Mammary epithelial cell (primary cell): ENCODE measurements at regions of chr17 and their contacts with region 1.

Region 1: GRCh38 chr17:52106638-52107261 is 51.8 kb downstream of the CA10 start:
- DNase-seq: peak; percentile 25
- H3K4me3 ChIP-seq: no peak overlapping the region
- H3K27ac ChIP-seq: no peak overlapping the region
- H3K4me1 ChIP-seq: peaks cover 9% of the 10 kb centered on the region
- H3K27me3 ChIP-seq: no peaks in the 10 kb centered on the region
- CTCF ChIP-seq: peak; percentile 78

Region 2: DNA sequence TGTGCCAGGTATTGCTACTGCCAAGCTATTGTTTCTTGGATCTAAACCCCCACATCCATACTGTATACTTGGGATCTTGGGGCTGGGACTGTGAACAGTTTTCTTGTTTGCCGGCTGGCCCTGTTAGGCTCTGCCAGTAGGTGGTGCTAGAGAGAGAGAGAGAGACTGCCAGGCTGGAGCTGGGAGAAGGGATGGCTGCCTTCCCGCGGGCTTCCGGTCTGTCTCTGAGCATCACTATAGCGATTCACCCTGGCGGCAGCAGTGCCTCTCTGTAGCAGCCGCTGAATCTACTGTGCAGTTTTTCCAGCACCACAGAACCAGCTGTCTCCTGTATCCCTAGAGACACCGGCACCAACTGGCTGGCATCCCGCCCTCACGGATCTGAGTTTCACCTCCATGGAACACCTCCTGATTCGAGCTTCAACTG is 645.2 kb before region 1 on chr17:
- CTCF ChIA-PET with region 1: no interaction called
- dilution Hi-C with region 1: no loop called
- in situ Hi-C with region 1: no loop called
- intact Hi-C with region 1: loop called (anchors 5 kb)
- DNase-seq: peak; percentile 24
- H3K4me3 ChIP-seq: no peak overlapping the region
- H3K27ac ChIP-seq: no peak overlapping the region
- H3K4me1 ChIP-seq: no peaks in the 10 kb centered on the region
- H3K27me3 ChIP-seq: no peaks in the 10 kb centered on the region
- CTCF ChIP-seq: peak; percentile 85 to 87

Region 3: DNA sequence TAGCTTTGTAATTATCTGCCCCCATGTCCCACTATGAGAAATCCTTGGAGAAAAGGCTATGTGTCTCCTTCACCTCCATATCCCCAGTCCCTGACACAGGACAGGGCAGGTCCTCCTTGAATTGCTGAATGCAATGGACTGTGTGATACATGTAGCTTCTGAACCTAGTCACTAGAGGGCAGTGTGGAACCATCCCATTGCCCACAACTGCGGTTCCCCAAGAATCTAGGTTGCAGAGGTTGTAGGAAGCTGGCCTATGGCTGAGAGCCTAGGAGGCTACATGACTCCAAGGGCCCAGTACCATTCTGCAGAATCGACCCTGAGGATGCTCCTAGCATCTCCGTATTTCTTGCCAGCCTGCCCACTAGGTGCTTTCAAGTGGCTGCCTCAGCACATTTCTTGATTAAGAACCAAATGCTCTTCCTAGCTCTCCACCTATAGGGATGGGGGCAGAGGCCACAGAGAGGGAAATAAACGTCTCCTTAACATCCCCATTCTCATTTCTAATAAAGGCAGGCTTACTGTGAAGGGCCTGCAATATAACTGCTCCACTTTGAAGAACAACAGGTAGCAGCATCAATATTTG is 342.3 kb before region 1 on chr17:
- CTCF ChIA-PET with region 1: interaction called, 4 read pairs
- dilution Hi-C with region 1: no loop called
- in situ Hi-C with region 1: loop called (anchors 10 kb)
- intact Hi-C with region 1: loop called (anchors 1 kb)
- DNase-seq: peak; percentile 58
- H3K4me3 ChIP-seq: no peak overlapping the region
- H3K27ac ChIP-seq: no peak overlapping the region
- H3K4me1 ChIP-seq: no peaks in the 10 kb centered on the region
- H3K27me3 ChIP-seq: no peaks in the 10 kb centered on the region
- CTCF ChIP-seq: peak; percentile 92 to 97

Region 4: GRCh38 chr17:51860954-51861561 is 245.7 kb before region 1 on chr17:
- CTCF ChIA-PET with region 1: interaction called, 4 read pairs
- dilution Hi-C with region 1: no loop called
- in situ Hi-C with region 1: loop called (anchors 10 kb)
- intact Hi-C with region 1: loop called (anchors 1 kb)
- DNase-seq: peak; percentile 35
- H3K4me3 ChIP-seq: no peak overlapping the region
- H3K27ac ChIP-seq: no peak overlapping the region
- H3K4me1 ChIP-seq: no peaks in the 10 kb centered on the region
- H3K27me3 ChIP-seq: peaks cover 3% of the 10 kb centered on the region
- CTCF ChIP-seq: peak; percentile 63 to 87

Region 5: DNA sequence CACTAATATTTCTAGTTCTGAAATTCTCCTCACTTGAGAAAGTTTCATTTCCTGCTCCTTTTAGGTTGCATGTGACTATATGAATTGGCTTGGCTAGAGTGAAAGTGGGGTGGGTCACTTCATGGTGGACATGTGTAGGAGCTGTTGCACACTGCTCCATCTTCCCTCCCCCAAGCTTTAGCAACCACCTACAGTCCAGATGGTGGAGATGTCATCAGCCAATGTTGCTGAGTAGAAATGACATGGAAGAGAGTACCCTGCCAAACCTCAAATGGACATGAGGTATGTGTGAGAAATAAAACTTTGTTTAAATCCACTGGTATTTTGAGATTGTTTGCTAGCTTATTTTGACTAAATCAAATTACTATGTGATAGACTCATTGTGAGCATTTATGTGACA is 229.8 kb before region 1 on chr17:
- CTCF ChIA-PET with region 1: no interaction called
- dilution Hi-C with region 1: no loop called
- in situ Hi-C with region 1: no loop called
- intact Hi-C with region 1: no loop called
- DNase-seq: no peak
- H3K4me3 ChIP-seq: no peak overlapping the region
- H3K27ac ChIP-seq: no peak overlapping the region
- H3K4me1 ChIP-seq: no peaks in the 10 kb centered on the region
- H3K27me3 ChIP-seq: peaks cover 2% of the 10 kb centered on the region
- CTCF ChIP-seq: no peak

Region 6: DNA sequence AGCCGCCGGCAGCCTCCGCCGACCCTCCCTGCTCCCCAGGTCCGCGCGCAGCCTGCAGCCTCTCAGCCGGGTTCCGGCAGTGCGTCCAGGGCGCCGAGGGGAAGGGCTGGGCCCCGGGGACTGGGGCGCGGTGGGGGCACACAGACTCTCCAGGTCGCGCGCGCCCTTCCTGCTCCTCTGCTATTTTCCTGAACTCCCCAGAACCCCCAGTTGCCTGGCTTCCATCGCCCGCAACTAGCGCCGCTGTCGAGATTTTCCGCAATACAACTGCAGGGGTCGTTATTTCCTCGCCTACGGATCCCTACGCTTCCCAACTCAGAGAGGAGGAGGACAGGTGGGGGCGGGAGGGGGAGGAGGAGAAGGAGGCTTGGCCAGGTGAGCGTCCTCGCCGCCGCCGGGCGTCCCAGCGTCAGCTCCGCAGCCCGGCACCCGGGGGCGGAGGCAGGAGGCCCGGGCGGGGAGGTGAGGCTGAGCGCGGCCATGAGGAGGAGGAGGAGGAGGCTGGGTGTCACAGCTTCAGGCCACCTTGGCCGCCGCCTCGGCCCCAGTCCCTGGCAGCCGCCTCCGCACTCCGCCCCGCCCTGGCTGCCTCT is 51.8 kb after region 1 on chr17 and contains the start of gene CA10:
- CTCF ChIA-PET with region 1: no interaction called
- dilution Hi-C with region 1: no loop called
- in situ Hi-C with region 1: no loop called
- intact Hi-C with region 1: loop called (anchors 1 kb)
- DNase-seq: no peak
- H3K4me3 ChIP-seq: peak within 1 kb of the TSS; percentile 41 to 60 (median 45)
- H3K27ac ChIP-seq: no peak within 1 kb of the TSS
- H3K4me1 ChIP-seq: peaks cover 25% of the 10 kb centered on the region
- H3K27me3 ChIP-seq: peaks cover 24% of the 10 kb centered on the region
- CTCF ChIP-seq: no peak
- total RNA-seq, gene CA10: 0.85 TPM in 1 of 2 donors, not detected in the other

Region 7: DNA sequence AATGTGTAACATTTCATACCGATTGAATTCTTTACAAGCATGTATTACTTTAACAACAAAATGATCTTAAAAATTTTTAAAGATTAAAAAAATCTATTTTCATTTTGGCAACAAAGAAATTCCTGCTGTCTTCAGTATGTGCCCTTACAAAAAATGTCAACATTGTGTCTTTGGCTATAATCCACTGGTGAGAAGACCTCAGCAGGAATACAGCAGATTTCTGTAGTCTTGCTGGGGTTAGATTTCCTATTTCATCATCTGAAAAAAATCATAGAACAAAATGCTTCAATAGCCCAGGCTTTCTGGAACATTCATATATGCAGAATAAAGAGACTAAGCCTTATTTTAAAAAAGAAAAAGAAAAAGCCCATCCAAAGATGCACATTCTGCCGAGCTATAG is 180.9 kb after region 1 on chr17:
- CTCF ChIA-PET with region 1: no interaction called
- dilution Hi-C with region 1: no loop called
- in situ Hi-C with region 1: no loop called
- intact Hi-C with region 1: no loop called
- DNase-seq: no peak
- H3K4me3 ChIP-seq: no peak overlapping the region
- H3K27ac ChIP-seq: no peak overlapping the region
- H3K4me1 ChIP-seq: no peaks in the 10 kb centered on the region
- H3K27me3 ChIP-seq: no peaks in the 10 kb centered on the region
- CTCF ChIP-seq: no peak

Region 8: DNA sequence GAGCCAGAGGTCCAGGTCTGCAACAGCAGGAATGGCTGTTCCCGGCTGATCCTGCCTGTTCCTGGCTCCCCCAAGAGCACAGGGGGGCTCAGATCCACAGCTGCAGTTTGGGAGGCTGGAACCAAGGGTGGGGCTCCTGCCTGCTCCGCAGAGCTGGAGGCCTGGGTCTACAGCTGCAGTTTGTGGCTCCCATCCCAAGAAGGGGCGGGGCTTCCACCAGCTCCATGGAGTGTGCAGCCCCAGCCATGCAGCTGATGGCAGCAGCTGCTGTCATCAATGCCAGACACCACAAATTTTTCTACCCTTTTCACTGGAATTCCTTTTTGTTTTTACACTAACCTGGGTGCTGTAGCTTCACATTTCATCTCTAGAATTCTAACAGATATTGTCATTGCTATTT is 1580.6 kb after region 1 on chr17:
- CTCF ChIA-PET with region 1: no interaction called
- dilution Hi-C with region 1: no loop called
- in situ Hi-C with region 1: no loop called
- intact Hi-C with region 1: no loop called
- DNase-seq: no peak
- H3K4me3 ChIP-seq: no peak overlapping the region
- H3K27ac ChIP-seq: no peak overlapping the region
- H3K4me1 ChIP-seq: no peaks in the 10 kb centered on the region
- H3K27me3 ChIP-seq: no peaks in the 10 kb centered on the region
- CTCF ChIP-seq: no peak